Ascending aorta (tissue), 2 donors: ENCODE measurements at regions of chr1 and their contacts with region 1.

Region 1: GRCh38 chr1:16946646-16947045 is 24.9 kb downstream of the CROCC start:
- DNase-seq: no peak
- H3K4me3 ChIP-seq: no peak overlapping the region
- H3K27ac ChIP-seq: no peak overlapping the region
- H3K4me1 ChIP-seq: peaks cover 0 to 4% of the 10 kb centered on the region in 2 donors
- H3K27me3 ChIP-seq: no peaks in the 10 kb centered on the region
- CTCF ChIP-seq: no peak

Region 2: DNA sequence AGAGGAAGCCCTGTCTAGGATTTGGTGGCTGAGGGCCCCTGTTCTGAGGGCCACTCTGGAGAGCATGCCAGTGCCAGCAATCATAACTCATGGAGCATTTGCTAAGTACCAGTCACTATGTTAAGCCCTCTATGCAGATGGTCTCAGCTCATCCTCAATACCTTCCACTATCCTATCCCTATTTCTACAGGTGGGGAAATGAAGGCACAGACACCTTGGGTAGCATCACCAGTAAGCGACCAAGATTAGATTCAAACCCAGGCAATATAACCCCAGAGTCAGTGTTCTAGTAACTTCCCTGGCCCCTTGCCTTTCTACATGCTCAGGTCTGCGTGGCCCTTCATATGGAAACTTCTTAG is 325.4 kb before region 1 on chr1:
- intact Hi-C with region 1: loop called (anchors 1 kb)
- DNase-seq: no peak
- H3K4me3 ChIP-seq: no peak overlapping the region
- H3K27ac ChIP-seq: no peak overlapping the region
- H3K4me1 ChIP-seq: no peaks in the 10 kb centered on the region
- H3K27me3 ChIP-seq: no peaks in the 10 kb centered on the region
- CTCF ChIP-seq: no peak

Region 3: DNA sequence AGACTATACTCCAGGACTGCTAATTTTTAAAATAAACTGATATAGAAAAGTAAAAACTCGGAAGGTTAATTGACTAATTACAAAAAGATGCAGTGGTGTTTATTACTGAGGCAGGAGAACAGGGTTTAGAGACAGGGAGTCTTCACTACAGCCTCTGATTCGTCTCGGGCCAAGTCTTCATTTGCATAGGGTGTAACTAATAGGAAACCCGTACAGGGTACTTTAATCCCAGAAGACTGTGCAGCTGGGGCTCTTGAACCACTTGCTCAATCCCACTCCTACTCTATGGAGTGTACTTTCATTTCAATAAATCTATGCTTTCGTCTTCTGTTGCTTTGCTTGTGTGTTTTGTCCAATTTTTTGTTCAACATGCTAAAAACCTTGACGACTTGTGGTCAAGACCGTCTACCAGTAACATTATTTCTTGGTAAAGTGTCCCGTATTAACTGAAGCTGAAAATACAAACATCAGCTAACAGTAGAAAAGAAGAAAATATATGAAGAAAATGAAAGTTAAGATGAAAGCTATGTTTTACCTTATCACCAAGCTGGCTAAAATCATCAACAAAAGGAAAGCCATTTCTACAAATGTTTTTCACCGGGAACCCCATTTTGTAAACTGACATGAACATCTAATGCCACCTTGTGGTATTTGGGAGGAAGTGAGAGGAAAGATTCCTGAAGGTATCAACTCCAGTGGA is 99.1 kb after region 1 on chr1:
- intact Hi-C with region 1: loop called (anchors 1 kb)
- DNase-seq: no peak
- H3K4me3 ChIP-seq: peak overlapping the region; percentile 6 to 40
- H3K27ac ChIP-seq: peak overlapping the region in 1 of 2 donors; percentile 5
- H3K4me1 ChIP-seq: peaks cover 0 to 5% of the 10 kb centered on the region in 2 donors
- H3K27me3 ChIP-seq: no peaks in the 10 kb centered on the region
- CTCF ChIP-seq: peak; percentile 71 to 82 (median 81)